ENCODE measurements at regions of chrX and their contacts with region 1.

Region 1: DNA sequence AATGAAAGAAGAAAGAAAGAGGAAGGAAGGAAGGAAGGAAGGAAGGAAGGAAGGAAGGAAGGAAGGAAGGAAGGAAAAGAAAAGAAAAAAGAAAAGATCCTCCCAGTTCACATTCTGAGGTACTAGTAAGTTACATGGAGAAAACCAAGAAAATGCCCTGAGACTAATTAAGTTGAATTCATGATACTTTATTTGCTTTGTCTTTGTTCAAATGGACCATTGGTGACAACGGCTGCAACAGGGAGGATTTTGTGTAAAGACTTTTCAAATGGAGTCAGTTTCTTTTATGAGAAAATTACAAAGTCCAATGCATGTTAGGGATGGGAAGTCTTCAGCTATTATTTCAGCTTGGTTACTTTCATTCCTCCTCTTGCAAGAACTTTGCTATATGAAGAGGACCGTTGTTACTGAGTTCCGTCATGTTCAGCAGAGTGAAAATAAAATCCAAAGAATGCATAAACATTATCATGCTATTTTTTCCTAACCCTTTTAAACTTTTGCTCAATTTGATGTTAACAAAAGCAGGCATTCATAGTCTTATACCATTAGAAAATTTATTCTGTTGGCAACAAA is 8.3 kb downstream of the VCX3A start:
- DNase-seq: no peak
- ATAC-seq: no peak
- H3K4me3 ChIP-seq: no peak overlapping the region
- H3K4me3 Mint-ChIP-seq: no peak overlapping the region
- H3K27ac ChIP-seq: no peak overlapping the region
- H3K27ac Mint-ChIP-seq: no peak overlapping the region
- H3K4me1 ChIP-seq: no peaks in the 10 kb centered on the region
- H3K4me1 Mint-ChIP-seq: no peaks in the 10 kb centered on the region
- H3K27me3 ChIP-seq: no peaks in the 10 kb centered on the region
- H3K27me3 Mint-ChIP-seq: no peaks in the 10 kb centered on the region
- CTCF ChIP-seq: no peak

Region 2: GRCh38 chrX:6460893-6461490 is 65.7 kb before region 1 on chrX:
- intact Hi-C with region 1: no loop called
- DNase-seq: no peak
- ATAC-seq: no peak
- H3K4me3 ChIP-seq: no peak overlapping the region
- H3K4me3 Mint-ChIP-seq: no peak overlapping the region
- H3K27ac ChIP-seq: no peak overlapping the region
- H3K27ac Mint-ChIP-seq: no peak overlapping the region
- H3K4me1 ChIP-seq: no peaks in the 10 kb centered on the region
- H3K4me1 Mint-ChIP-seq: no peaks in the 10 kb centered on the region
- H3K27me3 ChIP-seq: no peaks in the 10 kb centered on the region
- H3K27me3 Mint-ChIP-seq: no peaks in the 10 kb centered on the region
- CTCF ChIP-seq: no peak

Region 3: DNA sequence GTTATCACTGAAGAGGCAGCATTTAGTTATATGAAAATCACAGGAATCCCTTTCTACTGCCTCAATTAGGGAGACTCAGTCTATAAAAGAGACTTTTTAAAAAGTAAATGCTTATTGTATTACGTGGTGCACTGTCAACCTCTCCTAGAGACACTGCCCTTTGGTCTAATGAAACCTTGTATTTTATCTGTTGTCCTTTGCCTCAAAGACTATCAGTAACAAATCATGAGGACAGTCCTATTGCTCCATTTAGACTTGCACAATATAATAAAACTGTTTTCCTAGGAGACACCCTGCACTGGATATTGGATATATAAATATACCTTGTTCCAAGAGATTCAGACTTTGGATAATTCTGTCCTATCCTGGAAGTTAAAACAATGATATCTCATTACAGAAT is 25.9 kb before region 1 on chrX:
- intact Hi-C with region 1: no loop called
- DNase-seq: no peak
- ATAC-seq: no peak
- H3K4me3 ChIP-seq: no peak overlapping the region
- H3K4me3 Mint-ChIP-seq: no peak overlapping the region
- H3K27ac ChIP-seq: no peak overlapping the region
- H3K27ac Mint-ChIP-seq: no peak overlapping the region
- H3K4me1 ChIP-seq: no peaks in the 10 kb centered on the region
- H3K4me1 Mint-ChIP-seq: no peaks in the 10 kb centered on the region
- H3K27me3 ChIP-seq: no peaks in the 10 kb centered on the region
- H3K27me3 Mint-ChIP-seq: no peaks in the 10 kb centered on the region
- CTCF ChIP-seq: no peak

Region 4: GRCh38 chrX:8462488-8462887 is 1935.8 kb after region 1 on chrX:
- intact Hi-C with region 1: loop called (anchors 10 kb)
- DNase-seq: no peak
- ATAC-seq: no peak
- H3K4me3 ChIP-seq: no peak overlapping the region
- H3K4me3 Mint-ChIP-seq: no peak overlapping the region
- H3K27ac ChIP-seq: no peak overlapping the region
- H3K27ac Mint-ChIP-seq: no peak overlapping the region
- H3K4me1 ChIP-seq: no peaks in the 10 kb centered on the region
- H3K4me1 Mint-ChIP-seq: no peaks in the 10 kb centered on the region
- H3K27me3 ChIP-seq: no peaks in the 10 kb centered on the region
- H3K27me3 Mint-ChIP-seq: no peaks in the 10 kb centered on the region
- CTCF ChIP-seq: no peak